IMR-90 (cell line): ENCODE measurements at regions of chr7 and their contacts with region 1.

Region 1: DNA sequence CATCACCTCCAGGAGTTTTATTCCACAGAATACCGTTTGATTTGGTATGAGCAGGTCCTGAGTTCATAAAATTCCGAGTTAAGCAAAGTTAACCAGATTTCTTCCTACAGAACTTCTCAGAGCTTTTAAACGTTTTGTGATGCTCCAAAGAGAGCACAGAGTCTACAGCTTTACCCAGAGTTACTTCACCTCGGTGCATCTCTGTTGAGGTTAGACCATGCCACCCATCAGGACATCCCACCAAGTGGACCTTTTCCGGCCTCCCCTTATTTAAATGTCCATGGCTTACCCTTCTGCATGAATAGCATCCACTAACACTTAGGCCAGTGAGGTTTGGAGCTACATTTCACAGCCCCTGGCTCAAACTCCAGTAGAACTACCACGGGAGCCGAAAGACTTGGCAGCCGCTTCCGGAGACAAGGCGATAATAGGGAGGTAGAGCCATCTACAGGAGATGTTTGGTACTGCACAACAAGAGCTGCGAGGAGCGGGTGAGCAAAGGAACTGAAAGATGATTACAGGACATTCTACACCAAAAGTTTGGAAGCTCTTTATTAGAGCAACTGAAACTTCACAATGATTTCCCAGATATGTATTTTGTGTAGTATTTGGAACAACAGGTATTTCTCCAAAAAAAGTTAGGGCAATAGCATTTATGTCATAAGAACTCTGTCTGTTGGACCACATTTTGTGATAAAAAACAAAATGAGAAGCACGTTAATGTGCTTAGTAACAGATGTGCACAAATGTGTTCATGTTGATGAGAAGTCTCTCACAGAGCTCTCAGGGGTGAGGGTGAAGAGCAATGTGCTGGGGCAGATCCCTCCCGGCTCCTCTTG is 174.7 kb downstream of the HERPUD2 start:
- DNase-seq: peak; percentile 52
- ATAC-seq: peak; percentile 84
- H3K4me3 ChIP-seq: no peak overlapping the region
- H3K27ac ChIP-seq: no peak overlapping the region
- H3K4me1 ChIP-seq: no peaks in the 10 kb centered on the region
- H3K27me3 ChIP-seq: peaks cover 2% of the 10 kb centered on the region
- CTCF ChIP-seq: peak; percentile 70
- POLR2A ChIP-seq: no peak
- RAD21 ChIP-seq: peak; percentile 63

Region 2: GRCh38 chr7:35384761-35385700 is 135.2 kb before region 1 on chr7:
- CTCF ChIA-PET with region 1: no interaction called
- POLR2A ChIA-PET with region 1: no interaction called
- dilution Hi-C with region 1: no loop called
- in situ Hi-C with region 1: no loop called
- intact Hi-C with region 1: no loop called
- DNase-seq: no peak
- ATAC-seq: no peak
- H3K4me3 ChIP-seq: no peak overlapping the region
- H3K27ac ChIP-seq: no peak overlapping the region
- H3K4me1 ChIP-seq: no peaks in the 10 kb centered on the region
- H3K27me3 ChIP-seq: no peaks in the 10 kb centered on the region
- CTCF ChIP-seq: no peak
- POLR2A ChIP-seq: no peak
- RAD21 ChIP-seq: no peak

Region 3: DNA sequence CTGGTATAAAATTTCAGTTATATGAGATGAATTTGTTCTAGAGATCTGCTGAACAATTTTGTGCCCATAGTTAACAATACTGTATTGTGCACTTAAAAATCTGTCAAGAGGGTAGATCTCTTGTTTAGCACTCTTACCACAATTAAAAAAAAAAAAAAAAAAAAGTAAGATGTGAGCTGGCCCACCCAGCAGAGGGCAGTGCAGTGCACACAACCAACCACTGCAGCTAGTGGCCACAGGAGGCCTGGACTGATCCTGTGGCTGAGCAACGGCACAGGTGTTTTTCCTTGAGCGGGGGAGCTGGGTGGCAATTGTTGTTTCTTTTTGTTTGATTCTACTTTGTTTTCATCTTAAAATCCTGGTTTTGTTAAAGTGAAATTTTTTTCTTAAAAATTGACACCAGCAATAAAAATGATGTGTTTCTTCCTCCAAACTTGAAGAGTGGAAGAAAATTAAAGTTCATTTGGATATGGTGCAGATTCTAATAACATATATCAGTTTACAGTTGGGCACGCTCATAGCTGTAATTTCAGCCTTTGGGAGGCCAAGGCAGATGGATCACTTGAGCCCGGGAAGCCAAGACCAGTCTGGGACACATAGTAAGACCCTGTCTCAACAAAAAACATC is 95.2 kb before region 1 on chr7:
- CTCF ChIA-PET with region 1: no interaction called
- POLR2A ChIA-PET with region 1: no interaction called
- dilution Hi-C with region 1: no loop called
- in situ Hi-C with region 1: no loop called
- intact Hi-C with region 1: loop called (anchors 1 kb)
- DNase-seq: peak; percentile 43
- ATAC-seq: peak; percentile 89
- H3K4me3 ChIP-seq: no peak overlapping the region
- H3K27ac ChIP-seq: no peak overlapping the region
- H3K4me1 ChIP-seq: no peaks in the 10 kb centered on the region
- H3K27me3 ChIP-seq: no peaks in the 10 kb centered on the region
- CTCF ChIP-seq: peak; percentile 75
- POLR2A ChIP-seq: no peak
- RAD21 ChIP-seq: peak; percentile 57